ENCODE measurements at regions of chr1 and their contacts with region 1.

Region 1: DNA sequence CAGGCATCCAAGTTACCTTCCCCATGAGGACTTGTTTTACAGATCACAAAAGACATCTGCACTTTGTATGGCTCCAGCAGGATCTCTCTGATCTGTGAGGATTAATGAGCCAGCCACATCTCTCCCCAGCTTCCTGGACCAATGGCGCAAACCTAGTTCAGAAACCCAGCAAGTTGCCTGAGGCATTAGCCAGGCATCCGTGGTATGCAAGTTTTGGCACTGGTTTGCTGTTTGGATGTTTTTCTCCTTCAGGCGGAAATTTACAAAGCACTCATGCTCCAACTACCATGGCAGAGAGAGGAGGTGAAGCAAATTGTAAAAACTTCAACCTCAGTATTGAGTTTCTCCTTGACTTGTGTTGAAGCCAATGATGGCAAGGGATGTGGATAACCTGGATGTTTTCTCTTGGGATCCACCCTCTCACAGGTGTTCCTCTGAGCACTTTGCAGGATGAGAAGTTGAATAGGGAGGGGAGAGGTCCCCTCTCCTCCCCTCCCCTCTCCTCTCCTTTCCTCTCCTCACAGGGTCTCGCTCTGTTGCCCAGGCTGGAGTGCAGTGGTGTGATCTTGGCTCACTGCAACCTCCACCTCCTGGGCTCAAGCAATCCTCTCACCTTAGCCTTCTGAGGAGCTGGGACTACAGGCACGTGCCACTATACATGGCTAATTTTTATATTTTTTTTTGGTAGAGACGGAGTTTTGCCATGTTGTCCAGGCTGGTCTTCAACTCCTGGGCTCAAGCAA is 25.6 kb upstream of the ENO1 start:
- DNase-seq: no peak
- H3K4me3 Mint-ChIP-seq: no peak overlapping the region
- H3K27ac Mint-ChIP-seq: no peak overlapping the region
- H3K4me1 Mint-ChIP-seq: peaks cover 45% of the 10 kb centered on the region
- H3K27me3 Mint-ChIP-seq: no peaks in the 10 kb centered on the region

Region 2: DNA sequence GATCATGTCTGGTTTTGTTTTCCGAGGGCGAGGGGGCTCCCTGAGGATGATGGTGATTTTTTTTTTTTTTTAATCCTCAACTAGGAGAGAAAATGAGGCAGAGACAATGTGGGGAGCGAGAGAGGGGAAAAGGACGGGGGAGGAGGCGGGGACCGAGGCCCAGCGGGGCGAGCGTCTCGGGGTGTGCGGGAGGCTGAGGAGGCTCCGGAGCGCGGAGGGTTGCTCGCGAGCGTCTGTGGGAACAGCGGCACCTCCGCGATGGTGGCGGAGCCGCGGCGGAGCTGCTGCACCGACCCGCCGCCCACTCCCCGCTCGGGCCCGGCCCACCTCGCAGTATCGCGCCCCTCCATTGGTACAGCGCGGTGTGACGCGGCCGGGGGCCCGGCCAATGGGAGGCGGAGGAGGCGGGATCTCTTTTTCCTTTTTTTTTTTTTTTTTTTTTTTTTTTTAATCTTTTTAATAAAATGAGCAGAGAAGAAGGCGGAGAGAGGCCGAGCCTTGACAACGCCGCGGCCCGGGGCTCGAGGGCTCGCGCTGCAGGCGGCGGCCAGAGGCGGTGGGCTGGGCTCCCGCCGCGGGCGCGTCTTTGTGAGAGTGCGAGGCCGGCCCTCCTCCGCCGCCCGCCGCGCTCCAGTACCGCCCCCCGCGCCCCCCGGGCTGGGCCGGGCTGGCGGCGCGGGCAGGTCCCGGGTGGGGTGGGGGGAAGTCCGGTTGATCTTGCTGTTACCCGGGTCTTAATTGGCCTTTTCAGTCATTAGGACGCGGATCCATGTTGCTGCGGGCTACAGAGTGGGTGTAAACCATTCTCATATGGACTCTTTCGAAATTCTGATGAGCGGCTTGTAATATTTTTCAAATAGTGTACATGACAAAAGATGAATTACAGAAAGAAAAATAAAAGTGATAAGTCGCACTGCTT is 86.4 kb before region 1 on chr1 and contains the start of gene RERE:
- CTCF ChIA-PET with region 1: no interaction called
- POLR2A ChIA-PET with region 1: interaction called, 4 read pairs
- intact Hi-C with region 1: loop called (anchors 2 kb)
- DNase-seq: peak; percentile 97
- H3K4me3 Mint-ChIP-seq: peak within 1 kb of the TSS; percentile 86
- H3K27ac Mint-ChIP-seq: peak within 1 kb of the TSS; percentile 91
- H3K4me1 Mint-ChIP-seq: peaks cover 46% of the 10 kb centered on the region
- H3K27me3 Mint-ChIP-seq: peaks cover 4% of the 10 kb centered on the region
- total RNA-seq, gene RERE: 45.0 to 50.5 TPM

Region 3: DNA sequence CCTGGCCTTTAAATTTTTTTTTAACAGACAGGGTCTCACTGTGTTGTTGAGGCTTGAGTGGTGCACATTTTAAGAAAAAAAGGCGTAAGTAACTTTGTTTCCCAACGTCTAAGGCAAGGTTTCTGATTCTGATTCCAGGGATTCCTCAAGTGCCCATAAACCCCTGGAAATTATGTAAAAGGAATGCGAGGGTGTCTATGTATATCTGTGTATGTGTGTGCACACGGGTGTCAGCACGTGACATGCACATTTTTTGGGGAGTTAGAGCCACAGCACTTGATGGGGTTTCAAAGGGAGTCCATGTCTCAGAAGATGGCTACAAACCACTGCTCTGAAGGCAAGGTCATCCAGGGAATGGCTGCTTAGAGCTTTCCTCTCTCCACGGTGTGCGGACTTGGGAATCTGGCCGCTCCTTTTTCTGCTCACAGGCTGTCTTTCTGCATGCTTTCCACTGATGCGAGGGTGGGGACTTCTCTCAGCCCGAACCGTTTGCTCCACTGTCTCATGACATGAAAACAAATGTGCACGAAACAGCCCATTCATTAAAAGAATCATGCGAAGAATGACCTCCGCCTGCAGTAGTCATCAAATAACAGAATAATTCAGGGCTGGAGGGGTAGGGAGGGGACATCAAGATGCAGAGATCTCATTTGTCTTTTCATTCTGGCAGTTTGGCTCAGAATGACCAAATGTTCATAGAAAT is 68.0 kb before region 1 on chr1:
- CTCF ChIA-PET with region 1: no interaction called
- POLR2A ChIA-PET with region 1: no interaction called
- intact Hi-C with region 1: no loop called
- DNase-seq: no peak
- H3K4me3 Mint-ChIP-seq: no peak overlapping the region
- H3K27ac Mint-ChIP-seq: no peak overlapping the region
- H3K4me1 Mint-ChIP-seq: no peaks in the 10 kb centered on the region
- H3K27me3 Mint-ChIP-seq: no peaks in the 10 kb centered on the region

Region 4: GRCh38 chr1:8858888-8859706 is 45.0 kb before region 1 on chr1:
- CTCF ChIA-PET with region 1: interaction called, 3 read pairs
- POLR2A ChIA-PET with region 1: no interaction called
- intact Hi-C with region 1: loop called (anchors 1 kb)
- DNase-seq: peak; percentile 56
- H3K4me3 Mint-ChIP-seq: no peak overlapping the region
- H3K27ac Mint-ChIP-seq: peak overlapping the region; percentile 84
- H3K4me1 Mint-ChIP-seq: peaks cover 33% of the 10 kb centered on the region
- H3K27me3 Mint-ChIP-seq: no peaks in the 10 kb centered on the region

Region 5: DNA sequence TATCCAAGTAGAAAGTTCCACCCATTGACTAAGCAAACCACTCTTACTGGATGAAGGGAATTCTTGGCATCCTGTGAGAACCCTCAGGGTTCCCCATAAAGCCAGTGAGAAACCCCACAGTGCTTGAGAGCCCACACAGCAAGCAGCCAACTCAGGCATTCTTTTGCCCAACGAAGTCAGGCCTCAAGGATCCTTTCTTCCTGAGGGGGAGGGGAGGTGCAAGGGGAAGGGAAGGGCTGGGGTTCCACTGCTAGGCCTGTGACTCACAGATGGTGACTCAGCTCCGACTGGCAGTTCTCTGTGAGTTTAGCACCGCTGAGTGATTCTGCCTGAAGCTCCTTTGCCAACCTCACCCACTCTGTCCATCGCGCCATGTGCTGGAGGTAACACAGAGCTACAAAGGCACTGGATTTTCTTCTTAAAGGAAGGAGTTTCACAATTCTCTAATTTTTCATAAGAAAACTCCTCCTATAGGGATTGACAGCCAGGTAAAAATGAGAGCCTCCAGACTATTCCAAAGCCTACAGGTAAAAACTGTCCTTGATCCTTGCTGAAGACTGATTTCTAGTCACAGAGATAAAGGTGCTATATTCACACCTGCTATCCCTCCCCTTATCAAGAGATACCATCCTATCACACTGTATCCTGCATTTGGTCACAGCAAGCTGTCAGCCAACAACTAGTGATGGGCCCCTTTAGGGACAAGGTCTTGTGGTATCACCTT is 30.4 kb before region 1 on chr1:
- CTCF ChIA-PET with region 1: no interaction called
- POLR2A ChIA-PET with region 1: interaction called, 39 read pairs
- intact Hi-C with region 1: loop called (anchors 1 kb)
- DNase-seq: peak; percentile 91
- H3K4me3 Mint-ChIP-seq: peak overlapping the region; percentile 95
- H3K27ac Mint-ChIP-seq: peak overlapping the region; percentile 87
- H3K4me1 Mint-ChIP-seq: peaks cover 61% of the 10 kb centered on the region
- H3K27me3 Mint-ChIP-seq: peaks cover 2% of the 10 kb centered on the region

Region 6: GRCh38 chr1:8878448-8879347 is 25.4 kb before region 1 on chr1 and contains the start of gene ENO1:
- CTCF ChIA-PET with region 1: no interaction called
- POLR2A ChIA-PET with region 1: interaction called, 39 read pairs
- intact Hi-C with region 1: loop called (anchors 1 kb)
- DNase-seq: peak; percentile 99
- H3K4me3 Mint-ChIP-seq: peak within 1 kb of the TSS; percentile 95
- H3K27ac Mint-ChIP-seq: peak within 1 kb of the TSS; percentile 100
- H3K4me1 Mint-ChIP-seq: peaks cover 31% of the 10 kb centered on the region
- H3K27me3 Mint-ChIP-seq: peaks cover 2% of the 10 kb centered on the region
- total RNA-seq, gene ENO1: 3,008 to 3,028 TPM

Region 7: GRCh38 chr1:8941906-8942305 is 37.8 kb after region 1 on chr1:
- CTCF ChIA-PET with region 1: no interaction called
- POLR2A ChIA-PET with region 1: no interaction called
- intact Hi-C with region 1: loop called (anchors 1 kb)
- DNase-seq: no peak
- H3K4me3 Mint-ChIP-seq: no peak overlapping the region
- H3K27ac Mint-ChIP-seq: peak overlapping the region; percentile 51
- H3K4me1 Mint-ChIP-seq: peaks cover 78% of the 10 kb centered on the region
- H3K27me3 Mint-ChIP-seq: no peaks in the 10 kb centered on the region